A673 (cell line): ENCODE measurements at regions of chr3 and their contacts with region 1.

Region 1: DNA sequence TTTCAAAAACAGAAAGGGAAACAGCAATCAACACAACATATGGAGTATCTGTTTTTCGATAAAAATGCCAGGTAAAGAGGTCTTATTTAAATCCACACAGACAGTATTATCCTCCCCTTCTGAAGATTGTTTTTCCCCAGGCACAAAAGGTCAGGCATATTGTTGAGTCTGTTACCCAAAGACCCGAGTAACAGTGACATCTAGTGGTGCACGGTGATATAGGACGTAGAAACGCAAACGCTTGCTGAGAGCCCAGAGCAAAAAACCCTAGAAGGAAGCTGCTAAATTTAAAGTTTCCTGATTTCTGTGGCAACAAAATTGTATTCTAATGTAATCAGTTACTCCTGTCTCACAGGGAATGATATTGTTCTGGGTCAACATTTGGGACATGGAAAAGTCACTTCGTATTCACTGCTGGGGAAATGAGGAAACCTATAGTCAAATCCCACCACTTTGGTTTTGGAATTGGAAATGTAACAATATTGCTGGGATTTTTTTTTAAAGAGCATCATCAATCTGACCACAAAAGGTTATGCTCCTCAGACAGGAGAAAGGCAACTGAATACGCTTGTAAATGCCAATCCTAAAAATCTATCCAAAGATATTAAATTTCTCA is 312.7 kb upstream of the CCDC54 start:
- DNase-seq: peak; percentile 95
- H3K4me3 ChIP-seq: no peak overlapping the region
- H3K27ac ChIP-seq: peak overlapping the region; percentile 74
- H3K4me1 ChIP-seq: peaks cover 65% of the 10 kb centered on the region
- H3K27me3 ChIP-seq: no peaks in the 10 kb centered on the region
- CTCF ChIP-seq: peak; percentile 84

Region 2: GRCh38 chr3:106620646-106621045 is 443.9 kb before region 1 on chr3:
- CTCF ChIA-PET with region 1: no interaction called
- POLR2A ChIA-PET with region 1: no interaction called
- intact Hi-C with region 1: loop called (anchors 2 kb)
- DNase-seq: peak; percentile 83
- H3K4me3 ChIP-seq: no peak overlapping the region
- H3K27ac ChIP-seq: peak overlapping the region; percentile 88
- H3K4me1 ChIP-seq: peaks cover 13% of the 10 kb centered on the region
- H3K27me3 ChIP-seq: no peaks in the 10 kb centered on the region
- CTCF ChIP-seq: no peak

Region 3: GRCh38 chr3:106717178-106717780 is 347.3 kb before region 1 on chr3:
- CTCF ChIA-PET with region 1: interaction called, 9 read pairs
- POLR2A ChIA-PET with region 1: no interaction called
- intact Hi-C with region 1: loop called (anchors 1 kb)
- DNase-seq: peak; percentile 98
- H3K4me3 ChIP-seq: no peak overlapping the region
- H3K27ac ChIP-seq: peak overlapping the region; percentile 99
- H3K4me1 ChIP-seq: peaks cover 38% of the 10 kb centered on the region
- H3K27me3 ChIP-seq: no peaks in the 10 kb centered on the region
- CTCF ChIP-seq: no peak

Region 4: GRCh38 chr3:106824856-106825255 is 239.7 kb before region 1 on chr3:
- CTCF ChIA-PET with region 1: no interaction called
- POLR2A ChIA-PET with region 1: no interaction called
- intact Hi-C with region 1: loop called (anchors 10 kb)
- DNase-seq: peak; percentile 37
- H3K4me3 ChIP-seq: no peak overlapping the region
- H3K27ac ChIP-seq: no peak overlapping the region
- H3K4me1 ChIP-seq: peaks cover 31% of the 10 kb centered on the region
- H3K27me3 ChIP-seq: no peaks in the 10 kb centered on the region
- CTCF ChIP-seq: peak; percentile 39

Region 5: DNA sequence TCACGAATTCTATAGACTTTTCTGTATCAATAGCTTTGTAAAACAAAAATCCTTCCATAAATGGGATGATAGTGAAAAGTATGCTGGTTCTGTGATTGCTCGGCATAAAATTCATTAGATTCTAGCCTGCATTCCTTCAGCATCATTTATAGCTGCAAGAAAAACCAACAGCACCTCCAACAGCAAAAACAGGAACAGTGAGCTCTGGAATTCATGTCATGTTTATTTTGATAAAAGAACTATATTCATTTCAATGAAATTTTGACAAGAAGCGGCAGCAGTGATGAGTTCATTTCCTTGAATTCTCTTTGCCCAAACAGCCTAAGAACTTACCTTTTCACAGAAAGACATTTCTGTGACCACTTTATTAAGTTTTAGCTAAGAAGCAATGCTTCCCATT is 202.5 kb before region 1 on chr3:
- CTCF ChIA-PET with region 1: interaction called, 6 read pairs
- POLR2A ChIA-PET with region 1: no interaction called
- intact Hi-C with region 1: loop called (anchors 2 kb)
- DNase-seq: peak; percentile 70
- H3K4me3 ChIP-seq: no peak overlapping the region
- H3K27ac ChIP-seq: peak overlapping the region; percentile 76
- H3K4me1 ChIP-seq: peaks cover 20% of the 10 kb centered on the region
- H3K27me3 ChIP-seq: no peaks in the 10 kb centered on the region
- CTCF ChIP-seq: peak; percentile 55; the same call in 1 of the 2 replicates

Region 6: DNA sequence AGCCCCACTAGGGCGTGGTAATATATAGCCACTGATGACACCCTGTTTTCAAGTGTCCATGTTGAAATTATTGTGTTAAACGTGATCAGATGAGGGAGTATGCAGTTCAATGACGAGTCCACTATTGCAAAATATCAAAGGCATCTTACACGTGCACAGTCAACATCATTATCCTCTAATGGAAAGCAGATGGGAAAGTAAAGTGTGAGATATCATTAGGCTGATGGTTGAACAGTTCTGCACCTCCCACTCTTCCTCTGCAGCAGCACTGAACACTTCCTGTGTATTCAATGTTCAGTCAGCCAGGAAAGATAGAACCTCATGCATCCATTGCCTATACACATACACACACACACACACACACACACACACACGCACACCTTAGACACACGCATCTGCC is 119.1 kb before region 1 on chr3:
- CTCF ChIA-PET with region 1: no interaction called
- POLR2A ChIA-PET with region 1: no interaction called
- intact Hi-C with region 1: no loop called
- DNase-seq: peak; percentile 82
- H3K4me3 ChIP-seq: no peak overlapping the region
- H3K27ac ChIP-seq: peak overlapping the region; percentile 55
- H3K4me1 ChIP-seq: peaks cover 33% of the 10 kb centered on the region
- H3K27me3 ChIP-seq: no peaks in the 10 kb centered on the region
- CTCF ChIP-seq: no peak

Region 7: GRCh38 chr3:107117922-107118536 is 53.5 kb after region 1 on chr3:
- CTCF ChIA-PET with region 1: interaction called, 8 read pairs
- POLR2A ChIA-PET with region 1: no interaction called
- intact Hi-C with region 1: loop called (anchors 2 kb)
- DNase-seq: peak; percentile 93
- H3K4me3 ChIP-seq: no peak overlapping the region
- H3K27ac ChIP-seq: peak overlapping the region; percentile 59
- H3K4me1 ChIP-seq: peaks cover 17% of the 10 kb centered on the region
- H3K27me3 ChIP-seq: no peaks in the 10 kb centered on the region
- CTCF ChIP-seq: peak; percentile 86